ENCODE measurements at regions of chr13 and their contacts with region 1.

Region 1: GRCh38 chr13:32911506-32911905 is 104.7 kb upstream of the KL start:
- DNase-seq: peak in 5 of 9 donors; percentile 0 to 29 (median 21)
- ATAC-seq: peak; percentile 60
- H3K4me3 ChIP-seq: no peak overlapping the region
- H3K4me3 Mint-ChIP-seq: no peak overlapping the region
- H3K27ac ChIP-seq: no peak overlapping the region
- H3K27ac Mint-ChIP-seq: no peak overlapping the region
- H3K4me1 ChIP-seq: no peaks in the 10 kb centered on the region
- H3K4me1 Mint-ChIP-seq: peaks cover 0 to 25% (median 0%) of the 10 kb centered on the region in 7 donors
- H3K27me3 ChIP-seq: no peaks in the 10 kb centered on the region
- H3K27me3 Mint-ChIP-seq: peaks cover 0 to 10% (median 6%) of the 10 kb centered on the region in 5 donors

Region 2: GRCh38 chr13:32650705-32651311 is 260.7 kb before region 1 on chr13:
- CTCF ChIA-PET with region 1: no interaction called
- POLR2A ChIA-PET with region 1: no interaction called
- intact Hi-C with region 1: loop called in 1 of 2 experiments (anchors 5 kb)
- DNase-seq: peak in 8 of 9 donors; percentile 16 to 55 (median 41)
- ATAC-seq: peak; percentile 91
- H3K4me3 ChIP-seq: no peak overlapping the region
- H3K4me3 Mint-ChIP-seq: no peak overlapping the region
- H3K27ac ChIP-seq: no peak overlapping the region
- H3K27ac Mint-ChIP-seq: peak overlapping the region in 1 of 9 donors; percentile 21
- H3K4me1 ChIP-seq: peaks cover 0 to 10% of the 10 kb centered on the region in 2 donors
- H3K4me1 Mint-ChIP-seq: peaks cover 23 to 55% (median 40%) of the 10 kb centered on the region in 7 donors
- H3K27me3 ChIP-seq: no peaks in the 10 kb centered on the region
- H3K27me3 Mint-ChIP-seq: no peaks in the 10 kb centered on the region

Region 3: GRCh38 chr13:32669030-32669646 is 242.4 kb before region 1 on chr13:
- CTCF ChIA-PET with region 1: no interaction called
- POLR2A ChIA-PET with region 1: no interaction called
- intact Hi-C with region 1: loop called in 1 of 2 experiments (anchors 10 kb)
- DNase-seq: peak in 7 of 9 donors; percentile 11 to 57 (median 37)
- ATAC-seq: peak; percentile 72
- H3K4me3 ChIP-seq: no peak overlapping the region
- H3K4me3 Mint-ChIP-seq: no peak overlapping the region
- H3K27ac ChIP-seq: no peak overlapping the region
- H3K27ac Mint-ChIP-seq: peak overlapping the region in 2 of 9 donors; percentile 2 to 14
- H3K4me1 ChIP-seq: no peaks in the 10 kb centered on the region
- H3K4me1 Mint-ChIP-seq: peaks cover 2 to 31% (median 11%) of the 10 kb centered on the region in 7 donors
- H3K27me3 ChIP-seq: no peaks in the 10 kb centered on the region
- H3K27me3 Mint-ChIP-seq: no peaks in the 10 kb centered on the region

Region 4: GRCh38 chr13:32791545-32792172 is 119.8 kb before region 1 on chr13:
- CTCF ChIA-PET with region 1: no interaction called
- POLR2A ChIA-PET with region 1: no interaction called
- intact Hi-C with region 1: loop called in 1 of 2 experiments (anchors 5 kb)
- DNase-seq: peak in 7 of 9 donors; percentile 35 to 61 (median 47)
- ATAC-seq: peak; percentile 82
- H3K4me3 ChIP-seq: no peak overlapping the region
- H3K4me3 Mint-ChIP-seq: peak overlapping the region; percentile 14 to 75 (median 59)
- H3K27ac ChIP-seq: peak overlapping the region; percentile 55
- H3K27ac Mint-ChIP-seq: peak overlapping the region; percentile 77 to 96 (median 90)
- H3K4me1 ChIP-seq: peaks cover 0 to 28% of the 10 kb centered on the region in 2 donors
- H3K4me1 Mint-ChIP-seq: peaks cover 25 to 64% (median 50%) of the 10 kb centered on the region in 7 donors
- H3K27me3 ChIP-seq: no peaks in the 10 kb centered on the region
- H3K27me3 Mint-ChIP-seq: no peaks in the 10 kb centered on the region

Region 5: DNA sequence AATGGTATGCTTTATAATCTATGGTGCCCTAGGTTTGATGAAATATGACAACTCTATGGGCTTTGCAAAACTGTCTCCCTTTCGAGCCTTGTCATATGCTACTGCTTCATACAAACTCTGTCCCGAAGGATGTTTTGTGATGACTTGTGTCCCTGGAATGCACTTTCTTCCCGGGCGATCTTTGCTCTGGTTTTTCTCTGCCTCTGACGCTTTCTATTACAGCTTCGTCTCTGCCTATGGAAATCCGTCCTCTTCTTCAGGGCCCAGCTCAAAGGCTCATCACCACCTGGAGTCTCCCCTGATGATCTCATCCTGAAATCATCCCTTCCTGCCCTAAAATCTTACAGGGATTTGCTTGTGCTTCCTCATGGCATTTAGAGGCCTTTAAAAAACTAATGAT is 86.8 kb before region 1 on chr13:
- CTCF ChIA-PET with region 1: no interaction called
- POLR2A ChIA-PET with region 1: no interaction called
- intact Hi-C with region 1: no loop called
- DNase-seq: no peak
- ATAC-seq: no peak
- H3K4me3 ChIP-seq: no peak overlapping the region
- H3K4me3 Mint-ChIP-seq: no peak overlapping the region
- H3K27ac ChIP-seq: no peak overlapping the region
- H3K27ac Mint-ChIP-seq: no peak overlapping the region
- H3K4me1 ChIP-seq: no peaks in the 10 kb centered on the region
- H3K4me1 Mint-ChIP-seq: peaks cover 0 to 6% (median 0%) of the 10 kb centered on the region in 7 donors
- H3K27me3 ChIP-seq: no peaks in the 10 kb centered on the region
- H3K27me3 Mint-ChIP-seq: peaks cover 0 to 2% (median 0%) of the 10 kb centered on the region in 5 donors

Region 6: GRCh38 chr13:32881074-32881780 is 30.3 kb before region 1 on chr13:
- CTCF ChIA-PET with region 1: no interaction called
- POLR2A ChIA-PET with region 1: no interaction called
- intact Hi-C with region 1: no loop called
- DNase-seq: no peak
- ATAC-seq: no peak
- H3K4me3 ChIP-seq: no peak overlapping the region
- H3K4me3 Mint-ChIP-seq: no peak overlapping the region
- H3K27ac ChIP-seq: no peak overlapping the region
- H3K27ac Mint-ChIP-seq: no peak overlapping the region
- H3K4me1 ChIP-seq: no peaks in the 10 kb centered on the region
- H3K4me1 Mint-ChIP-seq: peaks cover 0 to 7% (median 0%) of the 10 kb centered on the region in 7 donors
- H3K27me3 ChIP-seq: no peaks in the 10 kb centered on the region
- H3K27me3 Mint-ChIP-seq: peaks cover 0 to 4% (median 0%) of the 10 kb centered on the region in 5 donors